ENCODE measurements at regions of chr1 and their contacts with region 1.

Region 1: GRCh38 chr1:204453141-204453772 is 41.3 kb downstream of the PIK3C2B start:
- DNase-seq: peak; percentile 86
- ATAC-seq: peak; percentile 96
- H3K4me3 Mint-ChIP-seq: peak overlapping the region; percentile 22
- H3K27ac Mint-ChIP-seq: peak overlapping the region; percentile 95
- H3K4me1 Mint-ChIP-seq: peaks cover 37% of the 10 kb centered on the region
- H3K27me3 Mint-ChIP-seq: no peaks in the 10 kb centered on the region

Region 2: DNA sequence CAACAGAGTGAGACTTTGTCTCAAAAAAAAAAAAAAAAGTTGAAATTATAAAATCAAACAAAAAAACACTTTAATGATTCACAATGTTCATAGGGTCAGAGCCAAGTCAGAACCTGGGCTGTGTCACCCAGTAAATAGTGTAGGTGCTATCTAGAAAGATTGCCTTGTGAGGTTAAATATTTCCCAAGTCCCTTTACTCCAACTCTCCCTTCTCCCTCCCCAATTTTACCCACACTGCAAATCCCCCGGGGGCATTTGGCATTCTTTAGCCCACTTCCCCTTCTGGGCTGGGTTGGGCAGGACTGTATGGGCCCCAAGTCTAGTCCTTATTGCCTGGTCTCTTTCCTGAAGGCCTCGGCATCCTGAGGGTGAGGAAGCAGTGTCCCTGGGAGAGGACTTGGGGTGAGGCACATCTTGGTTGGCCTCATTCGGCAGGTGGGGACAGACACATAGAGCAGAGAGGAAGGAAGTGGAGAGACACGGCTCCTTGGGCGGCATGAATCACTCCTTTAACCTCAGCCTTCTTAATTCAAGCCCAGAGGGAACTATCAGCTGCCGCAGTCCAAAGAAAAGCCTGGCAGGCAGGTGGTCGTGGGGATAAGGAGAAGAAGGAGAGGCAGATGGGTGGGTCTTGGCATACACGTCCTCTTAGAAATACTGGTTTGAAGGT is 1317.5 kb before region 1 on chr1:
- CTCF ChIA-PET with region 1: no interaction called
- POLR2A ChIA-PET with region 1: no interaction called
- intact Hi-C with region 1: no loop called
- DNase-seq: peak; percentile 18
- ATAC-seq: peak; percentile 69
- H3K4me3 Mint-ChIP-seq: no peak overlapping the region
- H3K27ac Mint-ChIP-seq: no peak overlapping the region
- H3K4me1 Mint-ChIP-seq: peaks cover 5% of the 10 kb centered on the region
- H3K27me3 Mint-ChIP-seq: peaks cover 5% of the 10 kb centered on the region

Region 3: GRCh38 chr1:204286831-204287421 is 166.3 kb before region 1 on chr1:
- CTCF ChIA-PET with region 1: no interaction called
- POLR2A ChIA-PET with region 1: no interaction called
- intact Hi-C with region 1: no loop called
- DNase-seq: peak; percentile 50
- ATAC-seq: peak; percentile 84
- H3K4me3 Mint-ChIP-seq: peak overlapping the region; percentile 50
- H3K27ac Mint-ChIP-seq: peak overlapping the region; percentile 87
- H3K4me1 Mint-ChIP-seq: peaks cover 22% of the 10 kb centered on the region
- H3K27me3 Mint-ChIP-seq: peaks cover 3% of the 10 kb centered on the region

Region 4: GRCh38 chr1:204366736-204367135 is 86.5 kb before region 1 on chr1:
- CTCF ChIA-PET with region 1: no interaction called
- POLR2A ChIA-PET with region 1: no interaction called
- intact Hi-C with region 1: no loop called
- DNase-seq: peak; percentile 60
- ATAC-seq: no peak
- H3K4me3 Mint-ChIP-seq: no peak overlapping the region
- H3K27ac Mint-ChIP-seq: peak overlapping the region; percentile 15
- H3K4me1 Mint-ChIP-seq: peaks cover 31% of the 10 kb centered on the region
- H3K27me3 Mint-ChIP-seq: peaks cover 2% of the 10 kb centered on the region

Region 5: DNA sequence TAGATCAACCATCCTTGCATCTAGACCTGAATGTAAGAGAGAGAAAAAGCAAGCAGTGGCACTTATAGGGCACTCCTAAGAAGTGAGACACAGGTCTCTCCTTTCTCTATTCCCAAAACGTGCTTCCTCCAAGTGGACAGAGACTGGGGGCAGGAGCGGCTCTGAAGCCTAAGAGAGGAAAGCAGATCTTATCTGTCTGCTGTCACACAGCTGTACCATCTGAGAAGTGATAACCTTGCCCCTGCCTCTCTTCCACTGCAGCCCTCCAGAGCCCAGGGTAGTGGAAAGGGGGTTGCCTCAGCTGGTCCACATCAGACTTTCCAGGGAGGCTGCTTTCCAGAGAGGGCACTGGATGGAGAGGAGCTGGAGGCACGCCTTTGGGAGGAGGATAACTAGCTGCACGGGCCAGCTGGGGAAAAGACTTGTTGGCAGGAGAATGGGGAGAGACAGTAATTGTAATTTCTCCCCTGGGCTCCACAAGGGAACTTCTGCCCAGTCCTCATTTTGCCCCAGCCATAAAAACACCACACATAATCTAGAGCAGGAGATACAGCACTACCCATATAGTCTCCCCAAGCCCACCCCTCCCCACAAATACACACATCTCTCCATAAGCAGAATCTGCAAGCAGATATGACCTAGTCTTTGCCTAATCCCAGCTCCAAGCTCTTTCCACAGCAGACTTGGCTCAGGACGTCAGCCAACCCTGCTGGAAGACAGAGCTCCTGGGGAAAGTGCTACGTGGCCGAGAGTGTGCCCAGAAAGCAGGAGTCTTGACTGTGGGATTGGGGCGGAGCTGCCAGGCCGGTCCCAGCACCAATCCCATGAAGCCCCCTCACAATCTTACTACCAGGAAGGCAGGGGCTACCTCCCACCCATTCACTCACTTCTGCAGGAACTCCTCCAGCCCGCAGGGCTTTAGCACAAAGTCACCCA is 10.1 kb after region 1 on chr1:
- CTCF ChIA-PET with region 1: interaction called, 34 read pairs
- POLR2A ChIA-PET with region 1: no interaction called
- intact Hi-C with region 1: loop called in 1 of 2 experiments (anchors 1 kb)
- DNase-seq: no peak
- ATAC-seq: no peak
- H3K4me3 Mint-ChIP-seq: no peak overlapping the region
- H3K27ac Mint-ChIP-seq: no peak overlapping the region
- H3K4me1 Mint-ChIP-seq: peaks cover 65% of the 10 kb centered on the region
- H3K27me3 Mint-ChIP-seq: no peaks in the 10 kb centered on the region

Region 6: GRCh38 chr1:204591594-204592051 is 138.4 kb after region 1 on chr1:
- CTCF ChIA-PET with region 1: no interaction called
- POLR2A ChIA-PET with region 1: no interaction called
- intact Hi-C with region 1: no loop called
- DNase-seq: no peak
- ATAC-seq: no peak
- H3K4me3 Mint-ChIP-seq: no peak overlapping the region
- H3K27ac Mint-ChIP-seq: no peak overlapping the region
- H3K4me1 Mint-ChIP-seq: no peaks in the 10 kb centered on the region
- H3K27me3 Mint-ChIP-seq: no peaks in the 10 kb centered on the region